Naive thymus-derived CD4-positive, alpha-beta T cell (primary cell): ENCODE measurements at regions of chr6 and their contacts with region 1.

Region 1: DNA sequence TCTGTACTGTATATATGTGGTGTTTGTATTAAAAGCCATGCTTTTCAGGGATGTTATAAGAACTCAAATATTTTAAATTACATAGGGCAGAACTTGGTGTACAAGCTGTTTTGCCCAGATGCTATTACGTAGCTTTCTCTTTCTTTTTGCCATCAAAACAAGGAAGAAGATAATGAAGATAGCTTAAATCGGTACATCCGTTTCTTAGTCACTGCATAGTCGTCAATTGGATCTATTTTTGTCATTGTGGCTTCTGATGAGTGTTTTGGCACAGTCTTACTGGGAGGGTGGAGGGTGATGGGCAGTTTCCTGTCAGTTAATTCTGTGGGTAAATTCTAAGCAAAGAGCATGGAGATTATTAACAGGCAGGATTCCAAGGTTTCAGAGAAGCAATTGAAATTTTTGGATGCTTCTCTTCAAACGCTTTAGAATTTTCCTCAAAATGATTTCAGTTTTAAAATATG is 649.1 kb upstream of the GJE1 start:
- DNase-seq: peak in 8 of 9 donors; percentile 32 to 85 (median 82)
- ATAC-seq: peak; percentile 98
- H3K4me3 ChIP-seq: peak overlapping the region; percentile 47
- H3K4me3 Mint-ChIP-seq: peak overlapping the region; percentile 74 to 93 (median 84)
- H3K27ac ChIP-seq: peak overlapping the region; percentile 68
- H3K27ac Mint-ChIP-seq: peak overlapping the region; percentile 81 to 97 (median 92)
- H3K4me1 ChIP-seq: peaks cover 11 to 24% of the 10 kb centered on the region in 2 donors
- H3K4me1 Mint-ChIP-seq: peaks cover 11 to 57% (median 41%) of the 10 kb centered on the region in 7 donors
- H3K27me3 ChIP-seq: no peaks in the 10 kb centered on the region
- H3K27me3 Mint-ChIP-seq: no peaks in the 10 kb centered on the region

Region 2: GRCh38 chr6:141309295-141309694 is 174.3 kb before region 1 on chr6:
- CTCF ChIA-PET with region 1: no interaction called
- POLR2A ChIA-PET with region 1: no interaction called
- intact Hi-C with region 1: loop called in 1 of 2 experiments (anchors 2 kb)
- DNase-seq: peak in 2 of 9 donors; percentile 4 to 15
- ATAC-seq: peak; percentile 62
- H3K4me3 ChIP-seq: no peak overlapping the region
- H3K4me3 Mint-ChIP-seq: no peak overlapping the region
- H3K27ac ChIP-seq: no peak overlapping the region
- H3K27ac Mint-ChIP-seq: no peak overlapping the region
- H3K4me1 ChIP-seq: no peaks in the 10 kb centered on the region
- H3K4me1 Mint-ChIP-seq: no peaks in the 10 kb centered on the region
- H3K27me3 ChIP-seq: no peaks in the 10 kb centered on the region
- H3K27me3 Mint-ChIP-seq: peaks cover 0 to 7% (median 0%) of the 10 kb centered on the region in 5 donors

Region 3: DNA sequence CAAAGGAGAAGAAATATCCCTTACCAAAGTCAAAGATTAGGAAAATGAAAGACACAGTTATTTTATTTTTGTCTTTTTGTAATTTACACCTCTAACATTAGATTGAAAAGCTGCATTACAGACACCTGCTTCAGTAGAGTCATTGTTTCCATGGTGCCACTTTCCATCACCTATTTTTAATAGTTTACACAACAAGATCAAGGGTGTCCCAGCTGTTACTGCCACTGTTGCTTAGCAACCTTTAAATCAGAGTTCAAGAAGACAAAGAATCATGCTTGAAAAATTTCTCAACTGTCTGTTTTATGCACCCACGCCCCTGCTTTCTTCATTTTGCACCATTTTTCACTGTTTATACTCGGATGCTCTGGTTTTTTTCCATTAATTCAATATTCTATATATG is 19.1 kb before region 1 on chr6:
- CTCF ChIA-PET with region 1: no interaction called
- POLR2A ChIA-PET with region 1: no interaction called
- intact Hi-C with region 1: loop called (anchors 1 kb)
- DNase-seq: peak in 6 of 9 donors; percentile 6 to 60 (median 30)
- ATAC-seq: peak; percentile 54
- H3K4me3 ChIP-seq: no peak overlapping the region
- H3K4me3 Mint-ChIP-seq: no peak overlapping the region
- H3K27ac ChIP-seq: no peak overlapping the region
- H3K27ac Mint-ChIP-seq: peak overlapping the region in 1 of 9 donors; percentile 54
- H3K4me1 ChIP-seq: peaks cover 0 to 8% of the 10 kb centered on the region in 2 donors
- H3K4me1 Mint-ChIP-seq: peaks cover 0 to 11% (median 4%) of the 10 kb centered on the region in 7 donors
- H3K27me3 ChIP-seq: no peaks in the 10 kb centered on the region
- H3K27me3 Mint-ChIP-seq: no peaks in the 10 kb centered on the region

Region 4: DNA sequence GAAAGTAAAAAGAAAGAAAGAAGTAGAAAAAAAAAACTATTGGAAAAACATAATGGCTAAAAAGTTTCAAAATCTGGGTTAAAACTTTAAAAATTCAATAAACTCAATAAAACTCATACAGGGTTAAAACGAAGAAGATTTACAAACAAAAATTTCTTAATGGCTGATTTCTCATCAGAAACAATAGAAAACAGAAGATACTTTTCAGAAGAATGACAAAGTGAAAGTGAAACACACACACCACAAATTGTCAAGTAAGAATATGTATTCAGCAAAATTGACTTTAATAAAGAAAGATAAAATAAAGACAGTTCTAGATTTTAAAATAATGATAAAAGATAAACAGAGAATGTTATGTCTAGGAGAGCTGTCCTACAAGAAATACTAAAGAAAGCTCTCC is 30.2 kb after region 1 on chr6:
- CTCF ChIA-PET with region 1: interaction called, 3 read pairs
- POLR2A ChIA-PET with region 1: no interaction called
- intact Hi-C with region 1: loop called (anchors 2 kb)
- DNase-seq: peak in 1 of 9 donors; percentile 1
- ATAC-seq: no peak
- H3K4me3 ChIP-seq: no peak overlapping the region
- H3K4me3 Mint-ChIP-seq: peak overlapping the region in 7 of 10 donors; percentile 13 to 65 (median 51)
- H3K27ac ChIP-seq: no peak overlapping the region
- H3K27ac Mint-ChIP-seq: peak overlapping the region in 3 of 9 donors; percentile 8 to 66 (median 14)
- H3K4me1 ChIP-seq: no peaks in the 10 kb centered on the region
- H3K4me1 Mint-ChIP-seq: peaks cover 5 to 17% (median 14%) of the 10 kb centered on the region in 7 donors
- H3K27me3 ChIP-seq: no peaks in the 10 kb centered on the region
- H3K27me3 Mint-ChIP-seq: no peaks in the 10 kb centered on the region